Naive thymus-derived CD4-positive, alpha-beta T cell (primary cell): ENCODE measurements at regions of chr4 and their contacts with region 1.

Region 1: DNA sequence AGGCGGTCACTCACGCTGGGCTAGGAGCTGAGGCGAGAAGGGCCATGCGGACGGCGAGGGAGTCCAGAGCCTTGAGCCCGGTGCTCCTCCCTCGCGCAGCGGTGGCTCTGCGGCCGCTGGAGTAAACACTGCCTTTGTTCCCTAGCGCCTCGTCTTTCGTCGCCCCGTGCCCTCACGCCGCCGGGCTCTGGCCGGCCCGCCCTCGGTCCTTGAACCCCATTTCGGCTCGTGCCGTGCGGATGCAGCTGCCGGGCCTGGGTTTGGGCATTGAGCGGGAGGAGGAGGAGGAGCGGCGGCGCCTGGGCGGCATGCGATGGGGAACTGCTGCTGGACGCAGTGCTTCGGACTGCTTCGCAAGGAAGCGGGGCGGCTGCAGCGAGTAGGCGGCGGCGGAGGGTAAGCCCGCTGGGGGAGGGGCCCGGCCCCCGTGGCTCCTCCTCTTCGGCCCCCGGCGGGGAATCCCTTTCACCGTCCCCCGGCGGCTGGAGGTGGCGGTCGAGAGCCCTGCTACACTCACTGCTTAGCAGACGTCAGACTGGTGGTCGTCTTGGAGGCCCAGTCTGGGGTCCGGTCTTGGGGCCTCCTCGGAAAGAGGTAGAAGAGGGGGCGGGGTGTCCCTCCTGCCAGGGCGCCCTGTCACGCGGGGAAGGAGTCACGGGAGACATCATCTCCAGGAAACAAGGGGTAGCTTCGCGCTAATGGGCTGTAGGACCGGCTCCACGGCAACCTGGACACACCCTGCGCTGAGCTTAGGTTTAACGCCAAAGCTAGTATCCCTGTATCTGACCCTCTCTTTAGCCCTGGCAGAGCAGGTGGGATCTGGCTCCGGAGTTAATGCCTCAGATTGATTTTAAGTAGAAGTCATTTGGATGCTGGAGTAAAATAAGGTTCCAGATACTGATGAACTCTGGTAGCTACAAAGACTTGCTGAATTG is at the start of gene AP1AR:
- DNase-seq: peak; percentile 61 to 87 (median 71)
- ATAC-seq: peak; percentile 73
- H3K4me3 ChIP-seq: peak within 1 kb of the TSS; percentile 71
- H3K4me3 Mint-ChIP-seq: peak within 1 kb of the TSS; percentile 86 to 99 (median 96)
- H3K27ac ChIP-seq: peak within 1 kb of the TSS; percentile 85
- H3K27ac Mint-ChIP-seq: peak within 1 kb of the TSS; percentile 91 to 100 (median 99)
- H3K4me1 ChIP-seq: peaks cover 3 to 12% of the 10 kb centered on the region in 2 donors
- H3K4me1 Mint-ChIP-seq: peaks cover 19 to 50% (median 33%) of the 10 kb centered on the region in 7 donors
- H3K27me3 ChIP-seq: no peaks in the 10 kb centered on the region
- H3K27me3 Mint-ChIP-seq: peaks cover under 1 to 4% (median 1%) of the 10 kb centered on the region in 5 donors
- total RNA-seq, gene AP1AR: 7.3 to 21.0 (median 17.0) TPM

Region 2: DNA sequence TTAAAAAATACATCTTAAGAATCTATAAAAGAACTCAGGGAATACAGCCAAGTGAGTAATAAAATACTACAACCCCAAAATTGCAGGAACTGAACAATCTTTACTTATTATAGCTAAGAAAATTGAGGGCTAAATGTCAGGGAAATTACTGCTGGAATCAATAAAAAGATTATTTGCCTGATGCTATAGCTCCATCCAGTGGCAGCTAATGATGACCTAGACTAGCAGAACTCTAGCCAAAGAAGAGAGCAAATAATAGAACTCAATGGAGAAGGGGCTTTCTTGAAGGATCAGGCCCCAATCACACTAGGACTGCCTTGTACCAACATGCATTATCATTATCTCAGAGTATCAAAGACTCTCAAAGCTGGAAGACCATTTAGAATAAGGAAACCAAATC is 171.8 kb before region 1 on chr4:
- CTCF ChIA-PET with region 1: no interaction called
- POLR2A ChIA-PET with region 1: no interaction called
- intact Hi-C with region 1: no loop called
- DNase-seq: no peak
- ATAC-seq: no peak
- H3K4me3 ChIP-seq: no peak overlapping the region
- H3K4me3 Mint-ChIP-seq: no peak overlapping the region
- H3K27ac ChIP-seq: no peak overlapping the region
- H3K27ac Mint-ChIP-seq: no peak overlapping the region
- H3K4me1 ChIP-seq: no peaks in the 10 kb centered on the region
- H3K4me1 Mint-ChIP-seq: peaks cover 0 to 6% (median 0%) of the 10 kb centered on the region in 7 donors
- H3K27me3 ChIP-seq: peaks cover 0 to 4% of the 10 kb centered on the region in 2 donors
- H3K27me3 Mint-ChIP-seq: peaks cover 0 to 13% (median 7%) of the 10 kb centered on the region in 5 donors

Region 3: DNA sequence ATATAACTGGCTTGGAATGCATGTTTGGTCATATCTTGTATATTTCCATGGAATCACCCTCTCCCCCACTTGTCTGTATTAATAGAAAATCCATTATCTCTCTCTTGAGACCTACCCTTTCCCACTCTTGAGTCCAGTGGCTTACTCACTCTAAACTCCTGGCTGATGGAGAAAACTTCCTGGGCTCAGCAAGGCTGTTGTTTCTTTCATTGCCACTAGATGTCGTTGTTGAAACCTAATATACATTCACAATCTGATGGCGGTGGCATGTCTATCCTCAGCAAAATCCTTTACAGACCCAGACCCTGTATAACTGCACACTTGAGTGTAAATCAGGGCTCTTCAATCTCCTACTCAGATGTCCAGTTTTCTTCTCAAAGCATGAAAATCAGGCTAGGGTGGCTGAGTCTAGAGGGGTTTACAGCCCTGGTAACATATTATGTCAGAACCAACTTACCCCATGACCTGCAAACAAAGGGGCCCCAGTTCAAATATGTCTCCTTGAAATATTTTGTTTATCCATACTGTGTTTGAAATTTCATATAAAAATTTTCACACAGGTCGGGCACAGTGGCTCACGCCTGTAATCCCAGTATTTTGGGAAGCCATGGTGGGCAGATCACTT is 156.8 kb before region 1 on chr4:
- CTCF ChIA-PET with region 1: interaction called, 3 read pairs
- POLR2A ChIA-PET with region 1: no interaction called
- intact Hi-C with region 1: loop called in 1 of 2 experiments (anchors 1 kb)
- DNase-seq: peak in 6 of 9 donors; percentile 2 to 43 (median 25)
- ATAC-seq: peak; percentile 77
- H3K4me3 ChIP-seq: no peak overlapping the region
- H3K4me3 Mint-ChIP-seq: no peak overlapping the region
- H3K27ac ChIP-seq: no peak overlapping the region
- H3K27ac Mint-ChIP-seq: no peak overlapping the region
- H3K4me1 ChIP-seq: no peaks in the 10 kb centered on the region
- H3K4me1 Mint-ChIP-seq: no peaks in the 10 kb centered on the region
- H3K27me3 ChIP-seq: no peaks in the 10 kb centered on the region
- H3K27me3 Mint-ChIP-seq: peaks cover 5 to 27% (median 10%) of the 10 kb centered on the region in 5 donors

Region 4: GRCh38 chr4:112119353-112119783 is 112.7 kb before region 1 on chr4:
- CTCF ChIA-PET with region 1: no interaction called
- POLR2A ChIA-PET with region 1: no interaction called
- intact Hi-C with region 1: loop called in 1 of 2 experiments (anchors 1 kb)
- DNase-seq: peak in 1 of 9 donors; percentile 41
- ATAC-seq: no peak
- H3K4me3 ChIP-seq: no peak overlapping the region
- H3K4me3 Mint-ChIP-seq: peak overlapping the region in 1 of 10 donors; percentile 65
- H3K27ac ChIP-seq: no peak overlapping the region
- H3K27ac Mint-ChIP-seq: peak overlapping the region in 1 of 9 donors; percentile 94
- H3K4me1 ChIP-seq: no peaks in the 10 kb centered on the region
- H3K4me1 Mint-ChIP-seq: peaks cover 2 to 17% (median 11%) of the 10 kb centered on the region in 7 donors
- H3K27me3 ChIP-seq: no peaks in the 10 kb centered on the region
- H3K27me3 Mint-ChIP-seq: peaks cover 0 to 14% (median 6%) of the 10 kb centered on the region in 5 donors

Region 5: DNA sequence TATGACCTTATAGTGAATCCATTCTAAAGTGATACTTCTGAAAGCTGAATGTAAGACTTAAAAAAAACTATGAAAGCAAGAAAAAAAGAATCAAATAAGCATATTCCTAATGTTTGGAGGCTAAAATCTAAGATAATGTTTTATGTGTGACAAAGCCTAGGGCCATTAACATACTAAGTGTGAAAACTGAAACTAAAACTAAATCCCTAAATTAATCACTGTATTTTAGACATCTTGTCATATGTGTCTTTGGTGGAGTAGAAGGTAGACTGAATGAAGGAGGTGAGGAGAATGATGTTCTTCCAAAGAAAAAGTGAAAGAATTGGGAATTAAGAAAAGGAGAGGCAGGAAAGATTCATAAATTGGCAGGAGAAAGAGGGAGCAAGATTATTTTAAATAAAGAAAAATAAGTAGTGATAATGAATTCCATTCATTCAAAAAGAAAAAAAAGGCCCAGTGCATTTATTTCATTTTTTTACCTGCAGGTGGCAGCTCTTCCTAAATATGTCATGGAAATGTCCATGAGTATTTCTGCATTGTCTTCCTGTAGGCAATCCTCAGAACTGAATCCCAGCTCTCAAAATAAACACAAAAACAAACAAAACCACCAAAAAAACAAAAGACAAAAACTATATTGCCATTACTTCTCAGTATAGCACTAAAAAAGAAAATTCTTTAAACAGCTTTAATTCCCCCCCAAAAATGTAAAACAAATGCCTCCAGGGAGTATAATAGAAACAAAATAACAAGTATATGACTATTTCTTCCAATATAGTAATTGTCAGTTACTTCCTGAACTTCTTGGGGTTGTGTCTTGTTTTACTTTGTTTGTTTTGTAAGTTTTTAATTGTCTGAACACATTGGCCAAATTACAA is 17.4 kb before region 1 on chr4:
- CTCF ChIA-PET with region 1: interaction called, 35 read pairs
- POLR2A ChIA-PET with region 1: interaction called, 6 read pairs
- intact Hi-C with region 1: loop called (anchors 1 kb)
- DNase-seq: peak in 3 of 9 donors; percentile 16 to 26 (median 20)
- ATAC-seq: no peak
- H3K4me3 ChIP-seq: no peak overlapping the region
- H3K4me3 Mint-ChIP-seq: no peak overlapping the region
- H3K27ac ChIP-seq: no peak overlapping the region
- H3K27ac Mint-ChIP-seq: peak overlapping the region in 2 of 9 donors; percentile 5 to 7
- H3K4me1 ChIP-seq: no peaks in the 10 kb centered on the region
- H3K4me1 Mint-ChIP-seq: peaks cover 0 to 9% (median 4%) of the 10 kb centered on the region in 7 donors
- H3K27me3 ChIP-seq: no peaks in the 10 kb centered on the region
- H3K27me3 Mint-ChIP-seq: peaks cover 0 to 6% (median 0%) of the 10 kb centered on the region in 5 donors

Region 6: DNA sequence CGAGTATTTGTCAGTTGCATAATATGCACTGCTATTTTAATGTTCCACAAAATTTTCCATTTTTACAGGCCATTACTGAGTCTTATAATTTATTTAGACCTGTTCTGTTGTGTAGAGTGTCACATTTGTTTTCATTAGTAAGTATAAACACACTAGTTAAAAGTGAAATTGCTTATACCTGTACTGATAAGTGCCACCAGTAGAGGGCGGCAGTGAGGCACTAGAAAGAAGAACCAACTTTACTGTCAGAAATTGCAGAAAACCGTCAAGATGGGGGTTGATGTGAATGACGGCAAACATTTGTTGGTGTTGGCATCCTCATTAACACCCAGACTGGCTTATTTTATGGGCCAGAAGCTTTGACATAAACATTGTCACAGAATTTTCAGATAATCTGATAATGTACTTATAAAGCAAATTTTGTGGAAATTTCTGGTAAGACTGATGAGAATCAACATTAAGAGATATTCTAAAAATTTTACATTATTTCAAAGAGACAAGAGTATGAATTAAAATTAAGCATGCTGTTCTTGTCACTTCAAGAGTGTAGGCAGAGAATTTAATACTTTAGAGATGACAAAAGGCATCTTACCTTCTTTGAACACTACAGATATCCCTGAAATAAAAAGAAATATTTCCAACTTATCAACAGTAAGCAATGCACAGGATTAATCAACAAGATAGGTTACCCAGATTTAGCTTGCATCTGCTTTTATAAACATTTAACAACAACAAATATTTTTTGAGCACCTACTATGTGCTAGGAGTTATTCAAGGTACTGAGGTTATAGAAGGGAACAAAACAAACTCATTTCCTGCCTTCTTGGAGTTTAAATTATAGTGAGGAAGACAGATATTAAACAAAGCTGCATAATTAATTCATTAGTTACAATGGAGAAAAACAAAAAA is 90.0 kb after region 1 on chr4:
- CTCF ChIA-PET with region 1: no interaction called
- POLR2A ChIA-PET with region 1: no interaction called
- intact Hi-C with region 1: loop called (anchors 1 to 5 kb)
- DNase-seq: peak; percentile 44 to 74 (median 71)
- ATAC-seq: peak; percentile 96
- H3K4me3 ChIP-seq: no peak overlapping the region
- H3K4me3 Mint-ChIP-seq: peak overlapping the region in 7 of 10 donors; percentile 27 to 75 (median 62)
- H3K27ac ChIP-seq: no peak overlapping the region
- H3K27ac Mint-ChIP-seq: peak overlapping the region in 3 of 9 donors; percentile 15 to 59 (median 38)
- H3K4me1 ChIP-seq: no peaks in the 10 kb centered on the region
- H3K4me1 Mint-ChIP-seq: peaks cover 10 to 34% (median 14%) of the 10 kb centered on the region in 7 donors
- H3K27me3 ChIP-seq: no peaks in the 10 kb centered on the region
- H3K27me3 Mint-ChIP-seq: no peaks in the 10 kb centered on the region

Region 7: GRCh38 chr4:112604589-112604988 is 372.5 kb after region 1 on chr4:
- CTCF ChIA-PET with region 1: interaction called, 8 read pairs
- POLR2A ChIA-PET with region 1: no interaction called
- intact Hi-C with region 1: loop called (anchors 1 to 10 kb)
- DNase-seq: peak in 7 of 9 donors; percentile 14 to 44 (median 35)
- ATAC-seq: peak; percentile 73
- H3K4me3 ChIP-seq: no peak overlapping the region
- H3K4me3 Mint-ChIP-seq: no peak overlapping the region
- H3K27ac ChIP-seq: no peak overlapping the region
- H3K27ac Mint-ChIP-seq: no peak overlapping the region
- H3K4me1 ChIP-seq: no peaks in the 10 kb centered on the region
- H3K4me1 Mint-ChIP-seq: no peaks in the 10 kb centered on the region
- H3K27me3 ChIP-seq: no peaks in the 10 kb centered on the region
- H3K27me3 Mint-ChIP-seq: no peaks in the 10 kb centered on the region